ENCODE measurements at regions of chr1 and their contacts with region 1.

Region 1: DNA sequence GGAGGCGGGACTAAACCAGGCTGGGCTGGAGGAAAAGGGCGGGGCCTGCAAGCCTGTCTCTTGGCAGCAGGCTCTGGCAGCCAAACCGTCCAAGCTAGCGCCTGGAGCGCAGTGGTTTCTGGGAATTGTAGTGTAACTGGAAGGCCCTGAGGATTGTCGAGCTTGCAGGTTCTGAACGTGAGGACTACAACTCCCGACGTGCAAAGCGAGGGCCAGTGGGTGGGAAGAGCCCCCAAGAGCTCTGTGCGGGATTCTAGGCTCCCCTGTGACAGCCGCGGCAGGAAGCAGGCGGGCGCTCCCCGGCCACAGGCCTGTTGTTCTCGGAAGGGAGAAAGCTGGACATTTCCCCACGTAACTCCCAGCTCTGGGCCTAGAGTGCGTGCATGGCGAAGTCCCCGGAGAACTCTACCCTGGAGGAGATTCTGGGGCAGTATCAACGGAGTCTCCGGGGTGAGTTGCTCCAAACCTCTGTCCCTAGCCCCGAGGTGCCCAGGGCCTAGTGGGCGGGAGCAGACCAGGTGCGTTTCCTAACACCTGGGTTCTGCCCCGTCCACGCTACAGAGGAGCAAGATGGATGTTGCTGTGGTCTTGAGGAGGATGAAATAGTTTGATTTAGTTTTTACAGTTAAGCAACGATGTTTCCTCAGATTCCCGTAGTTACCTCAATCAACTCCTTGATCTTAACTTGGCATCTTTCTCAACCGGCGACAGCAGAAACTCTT is at the start of gene SDCCAG8:
- DNase-seq: peak; percentile 85 to 98 (median 90)
- ATAC-seq: peak; percentile 73
- H3K4me3 ChIP-seq: peak within 1 kb of the TSS; percentile 99
- H3K4me3 Mint-ChIP-seq: peak within 1 kb of the TSS; percentile 98
- H3K27ac ChIP-seq: peak within 1 kb of the TSS; percentile 97 to 99
- H3K27ac Mint-ChIP-seq: peak within 1 kb of the TSS; percentile 100
- H3K4me1 ChIP-seq: peaks cover 20% of the 10 kb centered on the region
- H3K4me1 Mint-ChIP-seq: peaks cover 61% of the 10 kb centered on the region
- H3K27me3 ChIP-seq: no peaks in the 10 kb centered on the region
- H3K27me3 Mint-ChIP-seq: no peaks in the 10 kb centered on the region
- CTCF ChIP-seq: no peak
- total RNA-seq, gene SDCCAG8: 18.3 to 21.2 TPM

Region 2: DNA sequence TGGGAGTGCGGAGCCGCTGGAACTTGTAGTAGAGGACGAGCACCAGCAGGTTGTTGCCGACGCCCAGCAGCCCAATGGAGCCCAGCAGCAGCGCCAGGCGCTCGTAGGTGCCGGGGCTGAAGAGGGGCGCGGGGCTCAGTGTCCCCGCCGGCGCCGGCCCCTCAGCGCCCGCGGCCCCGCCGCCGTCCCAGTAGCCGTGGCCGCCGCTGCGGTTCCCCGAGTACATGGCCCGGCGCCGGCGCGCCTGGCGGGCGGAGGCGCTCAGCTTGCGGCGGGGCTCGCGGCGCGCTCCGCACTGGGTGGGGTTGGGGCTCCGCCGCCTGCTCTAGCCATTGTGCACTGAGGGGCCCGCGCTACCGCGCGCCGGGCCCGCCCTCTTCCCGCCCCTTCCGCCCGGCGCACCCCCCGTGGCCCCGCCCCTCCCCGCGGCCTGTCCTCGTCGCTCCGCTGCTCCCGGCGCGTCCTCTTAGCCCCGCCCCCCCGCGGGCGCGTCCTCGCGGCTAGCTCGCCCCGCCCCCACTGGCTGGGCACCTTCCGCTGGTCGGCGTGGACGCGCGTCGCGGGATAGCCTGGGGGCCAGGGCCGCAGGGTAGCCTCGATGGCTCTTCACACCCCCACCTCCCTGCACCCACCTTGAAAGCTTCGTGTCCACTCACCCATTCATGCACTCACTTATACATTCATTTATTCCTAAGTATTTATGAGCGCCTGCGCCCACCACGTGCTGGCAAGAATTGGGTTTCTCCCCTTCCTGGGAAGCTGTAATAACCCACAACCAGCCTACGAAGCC is 1615.7 kb before region 1 on chr1 and contains the starts of genes CHML and OPN3:
- CTCF ChIA-PET with region 1: no interaction called
- POLR2A ChIA-PET with region 1: interaction called, 10 read pairs
- intact Hi-C with region 1: loop called in 1 of 2 experiments (anchors 5 kb)
- DNase-seq: peak; percentile 75 to 95 (median 89)
- ATAC-seq: peak; percentile 94
- H3K4me3 ChIP-seq: peak within 1 kb of the TSS; percentile 87
- H3K4me3 Mint-ChIP-seq: peak within 1 kb of the TSS; percentile 93
- H3K27ac ChIP-seq: peak within 1 kb of the TSS; percentile 55 to 58
- H3K27ac Mint-ChIP-seq: peak within 1 kb of the TSS; percentile 82
- H3K4me1 ChIP-seq: peaks cover 17% of the 10 kb centered on the region
- H3K4me1 Mint-ChIP-seq: peaks cover 39% of the 10 kb centered on the region
- H3K27me3 ChIP-seq: no peaks in the 10 kb centered on the region
- H3K27me3 Mint-ChIP-seq: no peaks in the 10 kb centered on the region
- CTCF ChIP-seq: no peak
- total RNA-seq, gene CHML: 9.1 to 10.3 TPM
- total RNA-seq, gene OPN3: 1.9 to 2.3 TPM

Region 3: GRCh38 chr1:243216741-243217140 is 39.2 kb before region 1 on chr1:
- CTCF ChIA-PET with region 1: no interaction called
- POLR2A ChIA-PET with region 1: interaction called, 4 read pairs
- intact Hi-C with region 1: loop called in 1 of 2 experiments (anchors 5 kb)
- DNase-seq: no peak
- ATAC-seq: no peak
- H3K4me3 ChIP-seq: no peak overlapping the region
- H3K4me3 Mint-ChIP-seq: no peak overlapping the region
- H3K27ac ChIP-seq: no peak overlapping the region
- H3K27ac Mint-ChIP-seq: no peak overlapping the region
- H3K4me1 ChIP-seq: no peaks in the 10 kb centered on the region
- H3K4me1 Mint-ChIP-seq: peaks cover 4% of the 10 kb centered on the region
- H3K27me3 ChIP-seq: no peaks in the 10 kb centered on the region
- H3K27me3 Mint-ChIP-seq: no peaks in the 10 kb centered on the region
- CTCF ChIP-seq: no peak

Region 4: GRCh38 chr1:243275316-243275715 is 19.4 kb after region 1 on chr1:
- CTCF ChIA-PET with region 1: interaction called, 4 read pairs
- POLR2A ChIA-PET with region 1: interaction called, 11 read pairs
- intact Hi-C with region 1: no loop called
- DNase-seq: no peak
- ATAC-seq: no peak
- H3K4me3 ChIP-seq: no peak overlapping the region
- H3K4me3 Mint-ChIP-seq: no peak overlapping the region
- H3K27ac ChIP-seq: no peak overlapping the region
- H3K27ac Mint-ChIP-seq: no peak overlapping the region
- H3K4me1 ChIP-seq: no peaks in the 10 kb centered on the region
- H3K4me1 Mint-ChIP-seq: peaks cover 3% of the 10 kb centered on the region
- H3K27me3 ChIP-seq: no peaks in the 10 kb centered on the region
- H3K27me3 Mint-ChIP-seq: no peaks in the 10 kb centered on the region
- CTCF ChIP-seq: no peak

Region 5: DNA sequence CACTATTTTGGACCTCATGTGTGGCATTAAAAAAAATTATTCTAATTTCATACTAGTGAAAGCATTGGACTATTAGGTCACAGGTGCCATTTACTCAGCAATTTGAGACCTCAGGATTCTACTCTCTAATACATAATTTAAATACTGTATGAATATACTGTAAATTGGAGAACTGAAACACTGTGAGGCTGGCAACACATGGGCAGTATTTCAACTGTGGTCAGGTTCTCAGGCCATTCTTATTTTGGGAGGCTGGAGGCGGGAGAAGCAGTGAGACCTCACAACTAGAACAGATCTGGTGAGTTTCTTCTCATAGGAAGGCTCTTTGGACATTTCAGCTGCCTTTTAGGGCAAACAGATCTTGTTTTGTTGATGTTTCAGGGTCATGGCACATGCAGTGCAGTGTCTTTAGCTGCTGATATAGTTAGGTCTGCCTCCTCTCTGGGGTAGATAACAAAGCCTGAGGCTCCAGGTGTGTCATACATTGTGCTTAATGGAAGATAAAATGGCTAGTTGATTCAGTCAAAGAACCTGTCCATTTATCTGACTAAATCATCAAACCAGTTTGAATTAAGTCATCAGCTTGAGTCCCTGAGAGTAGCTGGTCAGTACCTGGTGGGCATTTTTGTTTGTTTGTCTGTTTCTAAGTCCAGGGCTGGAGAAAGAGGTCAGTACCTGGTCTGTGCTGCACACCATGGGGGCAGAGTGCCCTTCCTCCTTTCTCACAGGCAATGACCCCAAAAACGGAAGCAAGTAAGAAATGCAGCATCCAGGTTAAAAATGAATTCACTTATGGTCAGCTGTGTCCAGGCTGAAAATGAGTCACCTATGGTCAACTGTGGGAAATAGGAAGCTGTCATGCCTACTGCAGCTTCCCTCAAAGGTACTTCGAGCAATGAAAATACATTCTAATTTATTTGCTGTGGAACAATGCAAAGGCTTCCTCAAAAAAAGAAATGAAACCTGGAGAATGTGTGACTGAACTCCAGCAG is 216.1 kb after region 1 on chr1:
- CTCF ChIA-PET with region 1: no interaction called
- POLR2A ChIA-PET with region 1: no interaction called
- intact Hi-C with region 1: no loop called
- DNase-seq: peak in 2 of 14 experiments; percentile 26 to 34
- ATAC-seq: no peak
- H3K4me3 ChIP-seq: no peak overlapping the region
- H3K4me3 Mint-ChIP-seq: no peak overlapping the region
- H3K27ac ChIP-seq: no peak overlapping the region
- H3K27ac Mint-ChIP-seq: no peak overlapping the region
- H3K4me1 ChIP-seq: peaks cover 3% of the 10 kb centered on the region
- H3K4me1 Mint-ChIP-seq: peaks cover 20% of the 10 kb centered on the region
- H3K27me3 ChIP-seq: no peaks in the 10 kb centered on the region
- H3K27me3 Mint-ChIP-seq: no peaks in the 10 kb centered on the region
- CTCF ChIP-seq: no peak

Region 6: GRCh38 chr1:243605604-243606003 is 349.7 kb after region 1 on chr1:
- CTCF ChIA-PET with region 1: no interaction called
- POLR2A ChIA-PET with region 1: no interaction called
- intact Hi-C with region 1: no loop called
- DNase-seq: no peak
- ATAC-seq: no peak
- H3K4me3 ChIP-seq: no peak overlapping the region
- H3K4me3 Mint-ChIP-seq: no peak overlapping the region
- H3K27ac ChIP-seq: no peak overlapping the region
- H3K27ac Mint-ChIP-seq: no peak overlapping the region
- H3K4me1 ChIP-seq: no peaks in the 10 kb centered on the region
- H3K4me1 Mint-ChIP-seq: no peaks in the 10 kb centered on the region
- H3K27me3 ChIP-seq: no peaks in the 10 kb centered on the region
- H3K27me3 Mint-ChIP-seq: no peaks in the 10 kb centered on the region
- CTCF ChIP-seq: no peak

Region 7: GRCh38 chr1:244451951-244452795 is 1196.2 kb after region 1 on chr1:
- CTCF ChIA-PET with region 1: no interaction called
- POLR2A ChIA-PET with region 1: interaction called, 25 read pairs
- intact Hi-C with region 1: loop called (anchors 5 to 10 kb)
- DNase-seq: peak; percentile 97 to 100 (median 99)
- ATAC-seq: peak; percentile 83
- H3K4me3 ChIP-seq: peak overlapping the region; percentile 86
- H3K4me3 Mint-ChIP-seq: peak overlapping the region; percentile 93
- H3K27ac ChIP-seq: peak overlapping the region; percentile 16 to 96
- H3K27ac Mint-ChIP-seq: peak overlapping the region; percentile 98
- H3K4me1 ChIP-seq: peaks cover 15% of the 10 kb centered on the region
- H3K4me1 Mint-ChIP-seq: peaks cover 42% of the 10 kb centered on the region
- H3K27me3 ChIP-seq: no peaks in the 10 kb centered on the region
- H3K27me3 Mint-ChIP-seq: no peaks in the 10 kb centered on the region
- CTCF ChIP-seq: peak; percentile 45

Region 8: GRCh38 chr1:244864253-244865027 is 1608.5 kb after region 1 on chr1 and contains the start of gene HNRNPU:
- CTCF ChIA-PET with region 1: no interaction called
- POLR2A ChIA-PET with region 1: interaction called, 22 read pairs
- intact Hi-C with region 1: no loop called
- DNase-seq: peak; percentile 90 to 99 (median 96)
- ATAC-seq: peak; percentile 62
- H3K4me3 ChIP-seq: peak within 1 kb of the TSS; percentile 91
- H3K4me3 Mint-ChIP-seq: peak within 1 kb of the TSS; percentile 96
- H3K27ac ChIP-seq: peak within 1 kb of the TSS; percentile 98 to 99
- H3K27ac Mint-ChIP-seq: peak within 1 kb of the TSS; percentile 98
- H3K4me1 ChIP-seq: peaks cover 24% of the 10 kb centered on the region
- H3K4me1 Mint-ChIP-seq: peaks cover 53% of the 10 kb centered on the region
- H3K27me3 ChIP-seq: no peaks in the 10 kb centered on the region
- H3K27me3 Mint-ChIP-seq: peaks cover 5% of the 10 kb centered on the region
- CTCF ChIP-seq: peak; percentile 30
- total RNA-seq, gene HNRNPU: 415 TPM